Activated CD4-positive, alpha-beta T cell treated with anti-CD3 and anti-CD28 coated beads for 36 hours (primary cell): ENCODE measurements at regions of chr2 and their contacts with region 1.

Region 1: DNA sequence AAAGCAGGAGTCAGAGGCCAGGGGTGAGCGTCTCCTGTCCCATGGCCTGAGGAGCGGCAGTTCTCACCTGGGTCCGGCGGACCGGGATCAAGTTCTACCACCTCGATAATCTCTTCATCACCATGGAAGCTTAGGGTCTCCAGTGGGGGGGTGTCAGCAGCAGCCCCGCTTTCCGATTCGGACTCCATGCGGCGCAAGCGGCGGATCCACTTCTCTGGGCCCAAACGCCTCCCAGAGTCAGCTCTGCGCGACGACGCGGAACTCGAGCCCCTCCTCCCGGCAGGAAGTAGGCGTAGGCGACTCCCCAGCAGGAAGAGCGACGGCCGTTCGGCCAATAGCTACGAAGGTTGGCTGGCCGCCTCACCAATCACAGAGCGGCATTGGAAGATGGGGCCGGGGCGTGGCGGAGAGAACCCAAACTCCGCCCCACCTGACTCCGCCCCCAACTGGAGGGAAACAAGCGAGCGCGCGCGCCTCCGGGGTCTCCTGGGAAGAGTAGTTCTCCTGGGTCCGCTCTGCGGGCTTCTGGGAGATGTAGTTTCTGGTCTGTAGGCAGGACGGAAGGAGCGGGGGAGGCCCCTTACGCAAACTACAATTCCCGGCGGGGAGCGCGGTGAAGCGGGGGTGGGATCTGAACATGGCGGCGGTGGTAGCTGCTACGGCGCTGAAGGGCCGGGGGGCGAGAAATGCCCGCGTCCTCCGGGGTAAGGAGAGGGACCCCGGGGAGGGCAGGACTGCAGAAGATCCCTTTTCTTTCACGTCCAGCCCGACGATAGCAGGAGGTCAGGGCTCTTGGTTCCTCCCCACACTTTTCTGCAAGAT is at the starts of genes AAMP and PNKD:
- DNase-seq: peak; percentile 100
- ATAC-seq: peak; percentile 92
- H3K4me3 Mint-ChIP-seq: peak within 1 kb of the TSS; percentile 88
- H3K27ac Mint-ChIP-seq: peak within 1 kb of the TSS; percentile 86
- H3K4me1 Mint-ChIP-seq: peaks cover 34% of the 10 kb centered on the region
- H3K27me3 Mint-ChIP-seq: no peaks in the 10 kb centered on the region
- total RNA-seq, gene AAMP: 49.7 to 72.2 TPM
- total RNA-seq, gene PNKD: 17.8 to 18.5 TPM

Region 2: DNA sequence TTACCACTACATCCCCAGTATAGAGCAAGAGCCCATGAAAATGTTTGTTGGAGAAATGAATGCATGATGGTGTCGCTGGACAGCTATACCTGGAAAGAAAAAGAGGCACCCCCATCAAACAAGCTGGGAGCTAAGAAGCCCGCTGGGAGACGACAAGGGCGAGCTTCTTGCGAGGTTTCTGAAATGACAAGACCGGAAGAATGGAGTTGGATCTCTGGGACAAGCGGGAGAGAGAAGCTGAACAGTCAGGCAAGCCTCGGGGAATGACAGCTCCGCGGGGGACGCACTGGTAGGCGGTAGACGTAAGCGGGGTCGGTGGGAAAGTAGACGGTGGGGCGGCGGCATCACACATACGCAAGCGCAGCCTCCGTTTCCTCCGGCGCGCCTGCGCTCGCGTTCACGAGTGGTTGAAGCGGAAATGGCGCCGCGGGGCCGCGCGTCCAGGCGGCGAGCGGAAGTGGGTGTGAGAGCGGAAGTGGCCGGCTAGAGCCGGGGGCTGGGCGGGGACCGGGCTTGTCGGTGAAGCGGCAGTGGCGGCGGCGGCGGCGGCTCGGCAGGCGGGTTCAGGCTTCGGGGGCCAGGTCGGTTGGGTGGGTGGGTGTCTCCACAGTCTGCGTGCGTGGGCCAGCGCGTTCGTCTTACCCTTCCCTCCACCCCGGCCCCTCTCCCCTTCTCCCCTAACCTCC is 53.3 kb before region 1 on chr2 and contains the start of gene ARPC2:
- CTCF ChIA-PET with region 1: interaction called, 5 read pairs
- POLR2A ChIA-PET with region 1: interaction called, 4 read pairs
- intact Hi-C with region 1: loop called (anchors 1 kb)
- DNase-seq: peak; percentile 96
- ATAC-seq: peak; percentile 64
- H3K4me3 Mint-ChIP-seq: peak within 1 kb of the TSS; percentile 81
- H3K27ac Mint-ChIP-seq: peak within 1 kb of the TSS; percentile 96
- H3K4me1 Mint-ChIP-seq: peaks cover 34% of the 10 kb centered on the region
- H3K27me3 Mint-ChIP-seq: no peaks in the 10 kb centered on the region
- total RNA-seq, gene ARPC2: 563 to 632 TPM

Region 3: GRCh38 chr2:218286570-218287459 is 16.7 kb after region 1 on chr2:
- CTCF ChIA-PET with region 1: interaction called, 205 read pairs
- POLR2A ChIA-PET with region 1: interaction called, 24 read pairs
- intact Hi-C with region 1: loop called (anchors 1 kb)
- DNase-seq: peak; percentile 91
- ATAC-seq: peak; percentile 74
- H3K4me3 Mint-ChIP-seq: peak overlapping the region; percentile 80
- H3K27ac Mint-ChIP-seq: peak overlapping the region; percentile 99
- H3K4me1 Mint-ChIP-seq: peaks cover 88% of the 10 kb centered on the region
- H3K27me3 Mint-ChIP-seq: no peaks in the 10 kb centered on the region

Region 4: DNA sequence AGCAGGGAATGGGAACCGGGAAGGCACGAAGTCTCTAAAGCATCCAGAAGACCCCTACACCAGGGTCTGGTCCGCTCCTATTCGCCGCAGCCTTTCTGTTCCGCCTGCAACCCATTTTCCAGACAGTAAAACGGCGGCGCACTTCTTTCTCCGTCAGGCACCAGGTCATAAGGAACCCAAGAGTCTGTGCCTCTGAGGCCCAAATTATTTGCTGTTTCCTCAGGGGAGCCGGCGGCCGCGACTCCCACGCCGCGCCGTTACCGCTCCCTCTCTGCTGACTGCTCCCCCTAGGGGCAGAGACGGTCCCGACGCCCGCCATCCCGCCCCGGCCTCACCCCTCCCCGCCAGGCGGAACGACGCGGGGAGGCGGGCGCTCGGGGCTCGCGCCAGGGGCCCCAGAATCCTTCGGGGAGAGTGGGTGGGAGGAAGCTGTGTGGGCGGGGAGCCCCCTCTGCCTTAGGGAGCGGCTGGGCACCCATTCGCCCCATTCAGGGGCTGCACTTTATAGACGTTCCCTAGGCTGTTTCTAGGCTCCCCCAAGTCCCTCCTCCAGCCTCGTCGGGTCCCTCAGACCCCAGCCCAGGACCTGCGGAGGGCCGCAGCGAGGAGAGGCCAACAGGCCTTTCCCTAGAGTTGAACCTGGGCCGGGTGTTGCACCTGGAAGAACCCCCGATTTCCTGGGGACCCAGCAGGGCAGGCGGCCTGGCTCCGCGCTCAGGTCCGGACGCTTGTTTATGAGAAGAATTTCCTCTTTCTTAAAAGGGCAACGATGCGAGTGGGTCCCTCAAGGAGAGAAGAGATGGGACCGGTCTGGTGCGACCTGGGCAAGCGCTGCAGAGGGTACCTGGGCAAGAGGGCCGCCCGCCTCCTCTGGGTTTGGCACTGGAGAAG is 125.9 kb after region 1 on chr2:
- CTCF ChIA-PET with region 1: interaction called, 11 read pairs
- POLR2A ChIA-PET with region 1: interaction called, 4 read pairs
- intact Hi-C with region 1: loop called (anchors 1 kb)
- DNase-seq: peak; percentile 97
- ATAC-seq: peak; percentile 68
- H3K4me3 Mint-ChIP-seq: peak overlapping the region; percentile 85
- H3K27ac Mint-ChIP-seq: peak overlapping the region; percentile 92
- H3K4me1 Mint-ChIP-seq: peaks cover 29% of the 10 kb centered on the region
- H3K27me3 Mint-ChIP-seq: peaks cover 6% of the 10 kb centered on the region

Region 5: GRCh38 chr2:218607436-218608115 is 337.5 kb after region 1 on chr2 and contains the start of gene PLCD4:
- CTCF ChIA-PET with region 1: no interaction called
- POLR2A ChIA-PET with region 1: no interaction called
- intact Hi-C with region 1: no loop called
- DNase-seq: no peak
- ATAC-seq: no peak
- H3K4me3 Mint-ChIP-seq: no peak within 1 kb of the TSS
- H3K27ac Mint-ChIP-seq: no peak within 1 kb of the TSS
- H3K4me1 Mint-ChIP-seq: no peaks in the 10 kb centered on the region
- H3K27me3 Mint-ChIP-seq: peaks cover 12% of the 10 kb centered on the region
- total RNA-seq, gene PLCD4: 0.18 to 0.83 TPM

Region 6: GRCh38 chr2:218710687-218711549 is 440.8 kb after region 1 on chr2 and contains the start of gene TTLL4:
- CTCF ChIA-PET with region 1: no interaction called
- POLR2A ChIA-PET with region 1: no interaction called
- intact Hi-C with region 1: loop called in 1 of 2 experiments (anchors 1 kb)
- DNase-seq: peak; percentile 99
- ATAC-seq: peak; percentile 98
- H3K4me3 Mint-ChIP-seq: peak within 1 kb of the TSS; percentile 96
- H3K27ac Mint-ChIP-seq: peak within 1 kb of the TSS; percentile 80
- H3K4me1 Mint-ChIP-seq: peaks cover 20% of the 10 kb centered on the region
- H3K27me3 Mint-ChIP-seq: no peaks in the 10 kb centered on the region
- total RNA-seq, gene TTLL4: 33.7 to 46.6 TPM